Caco-2 (cell line): ENCODE measurements at regions of chr1 and their contacts with region 1.

Region 1: GRCh38 chr1:185681034-185681633 is 53.1 kb upstream of the HMCN1 start:
- DNase-seq: peak in 1 of 2 experiments; percentile 59
- H3K4me3 ChIP-seq: no peak overlapping the region
- H3K4me3 Mint-ChIP-seq: no peak overlapping the region
- H3K27ac Mint-ChIP-seq: no peak overlapping the region
- H3K4me1 ChIP-seq: no peaks in the 10 kb centered on the region
- H3K4me1 Mint-ChIP-seq: no peaks in the 10 kb centered on the region
- H3K27me3 ChIP-seq: no peaks in the 10 kb centered on the region
- H3K27me3 Mint-ChIP-seq: no peaks in the 10 kb centered on the region
- CTCF ChIP-seq: peak; percentile 42 to 53

Region 2: GRCh38 chr1:185170291-185170848 is 510.8 kb before region 1 on chr1:
- CTCF ChIA-PET with region 1: interaction called, 8 read pairs
- POLR2A ChIA-PET with region 1: no interaction called
- intact Hi-C with region 1: loop called (anchors 1 kb)
- DNase-seq: peak; percentile 55 to 71
- H3K4me3 ChIP-seq: no peak overlapping the region
- H3K4me3 Mint-ChIP-seq: peak overlapping the region; percentile 49
- H3K27ac Mint-ChIP-seq: no peak overlapping the region
- H3K4me1 ChIP-seq: no peaks in the 10 kb centered on the region
- H3K4me1 Mint-ChIP-seq: peaks cover 15% of the 10 kb centered on the region
- H3K27me3 ChIP-seq: no peaks in the 10 kb centered on the region
- H3K27me3 Mint-ChIP-seq: no peaks in the 10 kb centered on the region
- CTCF ChIP-seq: peak; percentile 75 to 79

Region 3: GRCh38 chr1:185208626-185209180 is 472.4 kb before region 1 on chr1:
- CTCF ChIA-PET with region 1: interaction called, 4 read pairs
- POLR2A ChIA-PET with region 1: no interaction called
- intact Hi-C with region 1: loop called (anchors 1 kb)
- DNase-seq: no peak
- H3K4me3 ChIP-seq: no peak overlapping the region
- H3K4me3 Mint-ChIP-seq: no peak overlapping the region
- H3K27ac Mint-ChIP-seq: no peak overlapping the region
- H3K4me1 ChIP-seq: no peaks in the 10 kb centered on the region
- H3K4me1 Mint-ChIP-seq: no peaks in the 10 kb centered on the region
- H3K27me3 ChIP-seq: no peaks in the 10 kb centered on the region
- H3K27me3 Mint-ChIP-seq: no peaks in the 10 kb centered on the region
- CTCF ChIP-seq: no peak

Region 4: DNA sequence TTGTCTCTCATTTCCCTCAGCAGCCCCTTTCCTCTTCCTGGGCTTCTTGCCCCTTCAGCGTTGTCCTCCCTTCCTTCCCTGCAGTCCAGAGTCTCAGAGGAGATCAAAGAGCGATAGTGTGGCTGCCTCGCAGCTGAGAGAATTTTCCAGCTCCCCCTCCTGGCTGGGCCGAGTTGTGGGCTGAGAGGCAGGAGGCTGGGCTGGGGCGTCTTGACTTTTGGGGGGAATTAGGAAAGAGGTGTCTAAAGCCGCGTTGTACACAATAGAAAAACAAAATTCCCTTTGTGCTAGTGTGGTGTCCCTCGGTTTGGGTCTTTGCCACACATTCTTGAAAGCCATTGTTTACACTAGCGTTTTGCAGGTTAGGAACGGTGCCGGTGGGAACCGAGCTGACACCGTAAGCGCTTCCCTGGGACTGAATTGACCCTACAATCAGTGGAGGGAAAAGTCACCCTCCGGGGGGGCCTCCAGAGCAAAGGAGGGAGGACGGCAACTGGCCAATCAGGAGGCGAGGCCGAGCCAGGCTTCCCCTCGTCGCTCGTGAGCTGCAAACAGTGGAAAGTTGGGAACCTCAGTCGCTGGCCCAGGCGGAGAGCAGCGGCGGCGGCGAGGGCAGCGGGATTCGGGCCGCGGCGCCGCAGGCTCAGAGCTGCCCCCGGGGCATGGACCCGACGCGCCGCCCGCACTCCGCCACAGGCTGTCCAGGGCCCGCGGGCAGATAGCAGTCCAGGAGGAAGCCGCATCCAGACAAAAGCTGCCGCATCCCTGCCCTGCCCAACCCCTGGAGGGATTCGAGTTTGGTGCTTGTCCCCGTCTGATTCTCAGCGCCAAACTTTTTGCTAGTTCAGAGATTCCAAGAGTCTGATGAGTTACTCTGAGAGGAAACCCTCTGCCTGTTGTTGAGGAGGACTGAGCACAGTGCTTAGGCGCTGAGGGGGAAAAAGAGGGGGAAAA is 53.0 kb after region 1 on chr1 and contains the start of gene HMCN1:
- CTCF ChIA-PET with region 1: no interaction called
- POLR2A ChIA-PET with region 1: no interaction called
- intact Hi-C with region 1: no loop called
- DNase-seq: peak; percentile 53 to 60
- H3K4me3 ChIP-seq: peak within 1 kb of the TSS; percentile 33
- H3K4me3 Mint-ChIP-seq: peak within 1 kb of the TSS; percentile 67
- H3K27ac Mint-ChIP-seq: no peak within 1 kb of the TSS
- H3K4me1 ChIP-seq: no peaks in the 10 kb centered on the region
- H3K4me1 Mint-ChIP-seq: peaks cover 8% of the 10 kb centered on the region
- H3K27me3 ChIP-seq: no peaks in the 10 kb centered on the region; the same call in 1 of the 2 replicates
- H3K27me3 Mint-ChIP-seq: peaks cover 28% of the 10 kb centered on the region
- CTCF ChIP-seq: peak; percentile 24 to 63
- total RNA-seq, gene HMCN1: 0.02 and 0.49 TPM in 2 replicates